Activated CD4-positive, alpha-beta T cell treated with anti-CD3 and anti-CD28 coated beads for 36 hours (primary cell): ENCODE measurements at regions of chr5 and their contacts with region 1.

Region 1: GRCh38 chr5:7878381-7878873 is 9.5 kb downstream of the MTRR start:
- DNase-seq: peak; percentile 29
- ATAC-seq: peak; percentile 72
- H3K4me3 Mint-ChIP-seq: peak overlapping the region; percentile 6
- H3K27ac Mint-ChIP-seq: peak overlapping the region; percentile 83
- H3K4me1 Mint-ChIP-seq: peaks cover 55% of the 10 kb centered on the region
- H3K27me3 Mint-ChIP-seq: no peaks in the 10 kb centered on the region

Region 2: DNA sequence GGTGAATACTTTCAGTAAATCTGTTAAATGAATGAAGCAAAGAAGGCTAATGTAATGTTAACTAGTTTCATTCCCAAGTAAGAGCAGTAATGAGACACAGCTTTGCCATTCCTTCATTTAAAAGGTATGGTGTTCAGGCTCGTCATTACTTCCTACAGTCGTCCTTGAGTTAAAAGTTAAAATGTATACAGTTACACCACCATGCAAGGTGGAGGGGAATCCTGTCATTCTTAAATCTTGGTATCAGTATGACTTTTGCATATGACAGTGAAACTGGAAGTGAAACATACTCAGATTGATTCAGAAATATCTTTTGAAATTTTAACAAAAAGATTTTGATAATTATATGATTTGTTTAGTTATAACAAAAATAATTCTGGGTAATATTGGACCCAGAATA is 16.4 kb after region 1 on chr5:
- CTCF ChIA-PET with region 1: interaction called, 4 read pairs
- POLR2A ChIA-PET with region 1: no interaction called
- intact Hi-C with region 1: loop called in 1 of 2 experiments (anchors 1 kb)
- DNase-seq: no peak
- ATAC-seq: peak; percentile 86
- H3K4me3 Mint-ChIP-seq: no peak overlapping the region
- H3K27ac Mint-ChIP-seq: peak overlapping the region; percentile 69
- H3K4me1 Mint-ChIP-seq: peaks cover 15% of the 10 kb centered on the region
- H3K27me3 Mint-ChIP-seq: no peaks in the 10 kb centered on the region

Region 3: DNA sequence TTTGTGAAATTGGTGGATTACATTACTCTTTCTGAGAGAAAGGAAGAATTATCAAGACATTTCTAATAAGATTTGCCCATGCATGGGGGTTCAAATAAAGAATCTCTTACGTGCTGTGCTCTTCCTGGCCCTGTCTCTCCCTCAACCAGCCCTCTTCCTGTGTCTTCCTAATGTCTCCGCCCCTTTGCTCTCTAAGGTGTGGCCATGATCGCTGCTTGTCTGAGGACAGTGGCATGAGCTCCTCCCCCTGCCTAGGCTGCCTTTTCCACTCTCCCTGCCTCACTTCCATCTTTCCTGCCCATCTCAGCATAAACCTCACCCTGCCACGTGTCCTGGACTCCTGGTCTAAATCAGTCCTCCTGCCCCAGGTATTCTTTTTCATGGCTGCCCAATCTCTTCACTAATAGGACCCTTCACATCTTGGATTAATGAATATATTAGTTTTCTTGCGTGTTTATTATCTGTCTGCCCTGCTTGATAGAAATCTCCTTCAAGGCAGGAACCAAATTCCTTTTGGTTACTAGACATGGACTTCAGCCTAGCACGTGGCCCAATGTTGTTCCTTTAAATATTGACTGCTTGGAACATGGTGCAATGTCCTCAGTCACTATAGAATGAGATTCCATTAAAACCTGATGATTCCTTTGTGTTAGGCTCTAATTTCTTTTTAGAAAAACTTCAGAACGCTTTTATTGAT is 112.8 kb after region 1 on chr5:
- CTCF ChIA-PET with region 1: no interaction called
- POLR2A ChIA-PET with region 1: no interaction called
- intact Hi-C with region 1: no loop called
- DNase-seq: no peak
- ATAC-seq: no peak
- H3K4me3 Mint-ChIP-seq: no peak overlapping the region
- H3K27ac Mint-ChIP-seq: no peak overlapping the region
- H3K4me1 Mint-ChIP-seq: no peaks in the 10 kb centered on the region
- H3K27me3 Mint-ChIP-seq: peaks cover 4% of the 10 kb centered on the region